Natural killer cell (primary cell): ENCODE measurements at regions of chr6 and their contacts with region 1.

Region 1: GRCh38 chr6:89432875-89433251 is at the start of gene ANKRD6:
- DNase-seq: peak; percentile 87 to 88
- ATAC-seq: peak; percentile 96 to 97 (median 96)
- H3K4me3 ChIP-seq: peak within 1 kb of the TSS; percentile 54
- H3K4me3 Mint-ChIP-seq: peak within 1 kb of the TSS; percentile 81
- H3K27ac ChIP-seq: no peak within 1 kb of the TSS
- H3K27ac Mint-ChIP-seq: peak within 1 kb of the TSS; percentile 31 to 71
- H3K4me1 ChIP-seq: peaks cover 11% of the 10 kb centered on the region
- H3K4me1 Mint-ChIP-seq: peaks cover 5 to 24% of the 10 kb centered on the region in 2 donors
- H3K27me3 ChIP-seq: no peaks in the 10 kb centered on the region
- H3K27me3 Mint-ChIP-seq: peaks cover 5 to 30% of the 10 kb centered on the region in 2 donors
- CTCF ChIP-seq: peak; percentile 84
- total RNA-seq, gene ANKRD6: 4.5 to 9.0 (median 4.6) TPM

Region 2: DNA sequence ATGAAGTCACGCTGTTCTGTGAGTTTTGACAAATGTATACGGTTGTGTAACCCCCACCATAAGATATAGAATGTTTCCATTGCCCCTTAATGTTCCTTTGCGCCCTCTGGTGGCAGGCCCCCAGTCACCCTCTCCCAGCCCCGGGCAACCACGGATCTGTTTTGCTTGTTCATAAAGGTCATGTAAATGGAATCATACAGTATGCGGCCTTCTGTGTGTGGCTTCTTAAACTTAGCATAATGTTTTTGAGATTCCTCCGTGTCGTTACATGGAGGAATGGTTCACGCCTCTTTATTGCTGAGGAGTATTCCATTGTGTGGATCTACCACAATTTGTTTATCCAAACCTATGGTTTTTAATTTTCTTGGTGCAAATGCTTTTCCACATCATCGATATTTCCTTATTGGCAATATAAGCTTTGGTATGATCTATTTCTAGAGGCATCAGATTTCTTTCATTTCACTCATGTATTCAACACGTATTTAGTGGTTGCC is 177.3 kb after region 1 on chr6:
- intact Hi-C with region 1: loop called (anchors 1 kb)
- DNase-seq: peak; percentile 73 to 83
- ATAC-seq: peak; percentile 82 to 91 (median 88)
- H3K4me3 ChIP-seq: no peak overlapping the region
- H3K4me3 Mint-ChIP-seq: no peak overlapping the region
- H3K27ac ChIP-seq: no peak overlapping the region
- H3K27ac Mint-ChIP-seq: no peak overlapping the region
- H3K4me1 ChIP-seq: no peaks in the 10 kb centered on the region
- H3K4me1 Mint-ChIP-seq: no peaks in the 10 kb centered on the region
- H3K27me3 ChIP-seq: no peaks in the 10 kb centered on the region
- H3K27me3 Mint-ChIP-seq: no peaks in the 10 kb centered on the region
- CTCF ChIP-seq: peak; percentile 93

Region 3: GRCh38 chr6:89638320-89639195 is 205.7 kb after region 1 on chr6 and contains the start of gene LYRM2:
- intact Hi-C with region 1: loop called (anchors 1 kb)
- DNase-seq: peak; percentile 90 to 95
- ATAC-seq: peak; percentile 93 to 98 (median 93)
- H3K4me3 ChIP-seq: peak within 1 kb of the TSS; percentile 91
- H3K4me3 Mint-ChIP-seq: peak within 1 kb of the TSS; percentile 98
- H3K27ac ChIP-seq: peak within 1 kb of the TSS; percentile 92
- H3K27ac Mint-ChIP-seq: peak within 1 kb of the TSS; percentile 99 to 100
- H3K4me1 ChIP-seq: peaks cover 10% of the 10 kb centered on the region
- H3K4me1 Mint-ChIP-seq: peaks cover 21 to 26% of the 10 kb centered on the region in 2 donors
- H3K27me3 ChIP-seq: no peaks in the 10 kb centered on the region
- H3K27me3 Mint-ChIP-seq: no peaks in the 10 kb centered on the region
- CTCF ChIP-seq: no peak
- total RNA-seq, gene LYRM2: 21.1 to 25.5 (median 25.0) TPM